Endothelial cell of umbilical vein (primary cell): ENCODE measurements at regions of chr13 and their contacts with region 1.

Region 1: DNA sequence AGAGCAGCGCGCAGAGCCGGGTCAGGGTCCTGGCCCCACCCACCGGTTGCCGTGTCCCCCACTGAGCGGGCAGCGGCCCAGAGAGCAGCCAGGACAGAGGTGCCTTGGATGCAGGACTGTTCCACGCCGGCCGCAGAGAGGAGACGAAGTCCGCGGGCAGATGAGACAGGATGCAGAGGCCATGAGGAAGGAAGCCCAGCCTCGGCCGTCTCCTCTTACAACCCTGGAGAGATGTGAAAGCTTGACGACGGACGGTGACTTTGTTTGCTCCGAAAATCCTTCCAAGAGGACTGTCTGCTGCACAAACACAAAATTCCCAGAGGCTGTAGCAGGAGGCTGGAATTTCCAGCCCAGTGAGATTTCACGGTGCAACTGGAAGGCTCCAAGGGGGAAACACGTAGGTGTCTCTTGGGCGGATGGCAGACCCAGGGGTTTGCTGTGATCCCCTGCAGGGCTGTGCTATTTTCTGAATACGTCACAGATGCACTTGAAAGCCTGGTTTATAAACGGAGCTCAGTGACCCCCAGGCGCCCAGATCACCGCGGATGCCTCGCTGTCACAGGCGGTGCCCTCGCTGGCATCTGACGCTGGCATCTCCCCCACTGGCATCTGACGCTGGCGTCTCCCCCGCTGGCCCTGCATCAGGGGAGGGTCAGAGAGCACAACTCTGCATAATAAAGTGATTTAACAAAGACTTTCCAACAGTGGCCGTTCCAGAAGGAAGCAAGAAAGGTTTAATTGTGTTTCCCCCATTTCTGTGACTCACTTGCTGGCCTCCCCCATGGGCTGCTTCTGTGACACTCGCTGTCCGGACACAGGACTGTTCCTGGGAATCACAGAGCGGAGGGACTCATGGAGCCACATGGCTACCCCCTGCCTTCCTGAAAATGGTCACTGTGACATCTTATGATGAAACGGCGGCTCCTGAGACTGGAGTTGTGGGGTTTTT is 62.0 kb upstream of the C13orf46 start:
- DNase-seq: peak; percentile 47
- H3K4me3 ChIP-seq: no peak overlapping the region
- H3K27ac ChIP-seq: peak overlapping the region; percentile 1
- H3K4me1 ChIP-seq: peaks cover 25% of the 10 kb centered on the region
- H3K27me3 ChIP-seq: no peaks in the 10 kb centered on the region
- CTCF ChIP-seq: no peak
- POLR2A ChIP-seq: no peak

Region 2: DNA sequence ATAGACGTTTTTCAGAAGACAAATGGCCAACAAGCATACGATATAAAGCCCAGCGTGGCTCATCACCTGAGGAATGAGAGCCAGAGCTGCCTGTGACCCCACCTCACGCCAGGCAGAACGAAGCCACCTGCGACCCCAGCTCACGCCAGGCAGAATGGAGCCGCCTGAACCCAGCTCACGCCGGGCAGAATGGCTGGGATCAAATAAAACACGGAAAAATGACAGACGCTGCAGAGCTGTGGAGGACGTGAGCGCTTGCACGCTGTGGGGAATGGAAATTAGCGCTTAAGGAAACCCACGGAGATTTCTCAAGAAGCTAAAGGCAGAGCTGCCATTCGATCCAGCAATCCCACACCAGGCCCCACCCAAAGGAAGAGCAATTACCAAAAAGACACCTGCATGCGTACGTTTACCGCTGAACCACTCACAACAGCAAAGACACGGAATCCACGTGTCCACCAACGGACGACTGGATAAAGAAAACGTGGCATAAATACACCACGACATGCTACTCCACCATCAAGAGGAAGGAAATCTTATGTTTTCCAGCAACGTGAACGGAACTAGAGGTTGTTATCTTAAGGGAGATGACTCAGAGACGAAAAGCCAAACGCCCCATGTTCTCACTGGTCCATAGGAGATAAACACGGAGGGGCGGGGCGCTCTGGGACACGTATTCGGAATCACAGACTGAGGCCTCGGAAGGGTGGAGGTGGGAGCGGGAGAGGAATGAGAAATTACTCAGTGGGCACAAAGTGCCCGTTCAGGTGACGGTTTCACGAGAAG is 31.2 kb before region 1 on chr13:
- CTCF ChIA-PET with region 1: no interaction called
- POLR2A ChIA-PET with region 1: no interaction called
- dilution Hi-C with region 1: no loop called
- intact Hi-C with region 1: loop called (anchors 2 kb)
- DNase-seq: peak; percentile 96
- H3K4me3 ChIP-seq: no peak overlapping the region
- H3K27ac ChIP-seq: peak overlapping the region; percentile 91
- H3K4me1 ChIP-seq: peaks cover 18% of the 10 kb centered on the region
- H3K27me3 ChIP-seq: no peaks in the 10 kb centered on the region
- CTCF ChIP-seq: no peak
- POLR2A ChIP-seq: peak; percentile 32

Region 3: GRCh38 chr13:114053026-114053425 is 17.2 kb after region 1 on chr13:
- CTCF ChIA-PET with region 1: interaction called, 4 read pairs
- POLR2A ChIA-PET with region 1: no interaction called
- dilution Hi-C with region 1: no loop called
- intact Hi-C with region 1: loop called (anchors 2 kb)
- DNase-seq: no peak
- H3K4me3 ChIP-seq: no peak overlapping the region
- H3K27ac ChIP-seq: no peak overlapping the region
- H3K4me1 ChIP-seq: peaks cover 15% of the 10 kb centered on the region
- H3K27me3 ChIP-seq: no peaks in the 10 kb centered on the region
- CTCF ChIP-seq: no peak
- POLR2A ChIP-seq: no peak

Region 4: GRCh38 chr13:114065141-114065925 is 29.5 kb after region 1 on chr13:
- CTCF ChIA-PET with region 1: interaction called, 5 read pairs
- POLR2A ChIA-PET with region 1: no interaction called
- dilution Hi-C with region 1: no loop called
- intact Hi-C with region 1: loop called (anchors 2 kb)
- DNase-seq: peak; percentile 96
- H3K4me3 ChIP-seq: no peak overlapping the region
- H3K27ac ChIP-seq: peak overlapping the region; percentile 95
- H3K4me1 ChIP-seq: peaks cover 51% of the 10 kb centered on the region
- H3K27me3 ChIP-seq: no peaks in the 10 kb centered on the region
- CTCF ChIP-seq: no peak
- POLR2A ChIP-seq: peak; percentile 51

Region 5: GRCh38 chr13:114119196-114119595 is 83.3 kb after region 1 on chr13:
- CTCF ChIA-PET with region 1: no interaction called
- POLR2A ChIA-PET with region 1: no interaction called
- dilution Hi-C with region 1: no loop called
- intact Hi-C with region 1: loop called (anchors 2 kb)
- DNase-seq: peak; percentile 97
- H3K4me3 ChIP-seq: peak overlapping the region in 1 of 3 experiments; percentile 13
- H3K27ac ChIP-seq: peak overlapping the region; percentile 99
- H3K4me1 ChIP-seq: peaks cover 49% of the 10 kb centered on the region
- H3K27me3 ChIP-seq: no peaks in the 10 kb centered on the region
- CTCF ChIP-seq: no peak
- POLR2A ChIP-seq: peak; percentile 35

Region 6: GRCh38 chr13:114259974-114260373 is 224.1 kb after region 1 on chr13:
- CTCF ChIA-PET with region 1: no interaction called
- POLR2A ChIA-PET with region 1: no interaction called
- dilution Hi-C with region 1: no loop called
- intact Hi-C with region 1: no loop called
- DNase-seq: no peak
- H3K4me3 ChIP-seq: no peak overlapping the region
- H3K27ac ChIP-seq: no peak overlapping the region
- H3K4me1 ChIP-seq: no peaks in the 10 kb centered on the region
- H3K27me3 ChIP-seq: no peaks in the 10 kb centered on the region
- CTCF ChIP-seq: no peak
- POLR2A ChIP-seq: no peak